PC-9 (cell line): ENCODE measurements at regions of chr11 and their contacts with region 1.

Region 1: GRCh38 chr11:73152861-73153483 is 10.9 kb upstream of the FCHSD2 start:
- DNase-seq: peak; percentile 57 to 66
- H3K4me3 ChIP-seq: no peak overlapping the region
- H3K27ac ChIP-seq: no peak overlapping the region
- H3K4me1 ChIP-seq: peaks cover 24% of the 10 kb centered on the region
- H3K27me3 ChIP-seq: no peaks in the 10 kb centered on the region
- CTCF ChIP-seq: no peak

Region 2: DNA sequence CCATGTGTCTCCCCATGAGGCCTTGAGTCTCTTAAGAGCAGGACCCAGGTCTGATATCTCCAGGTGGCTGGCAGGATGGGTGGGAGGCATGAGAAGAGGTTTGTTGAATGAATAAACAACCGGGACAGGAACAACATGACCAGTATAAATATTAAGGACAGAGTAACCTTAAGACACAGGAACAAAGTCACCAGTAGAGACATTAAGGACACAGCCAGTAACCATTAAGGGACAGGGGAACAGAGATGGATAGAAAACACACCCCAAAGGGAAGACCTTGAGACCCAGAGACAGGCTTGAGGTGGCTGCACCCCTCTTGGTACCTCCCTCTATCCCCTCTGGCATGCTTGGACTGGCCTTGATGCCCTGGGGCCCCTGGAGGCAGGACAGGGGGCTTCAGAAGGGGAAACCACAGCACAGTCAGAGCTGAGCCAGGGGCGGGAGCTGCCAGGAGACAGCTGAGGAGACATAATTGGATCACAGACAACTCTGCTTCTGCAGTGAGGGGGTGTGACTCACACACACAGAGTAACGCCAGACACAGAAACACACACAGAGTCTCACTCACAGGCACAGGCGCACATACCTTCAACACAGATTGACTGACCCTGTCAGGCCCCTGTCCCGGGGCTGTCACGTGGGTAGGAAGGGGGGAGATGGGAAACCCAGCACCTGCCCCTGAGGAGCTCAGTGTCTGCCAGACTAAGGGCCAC is 379.8 kb before region 1 on chr11:
- CTCF ChIA-PET with region 1: no interaction called
- POLR2A ChIA-PET with region 1: interaction called, 12 read pairs
- intact Hi-C with region 1: no loop called
- DNase-seq: no peak
- H3K4me3 ChIP-seq: no peak overlapping the region
- H3K27ac ChIP-seq: no peak overlapping the region
- H3K4me1 ChIP-seq: peaks cover 18% of the 10 kb centered on the region
- H3K27me3 ChIP-seq: no peaks in the 10 kb centered on the region
- CTCF ChIP-seq: no peak

Region 3: GRCh38 chr11:72885749-72886609 is 267.0 kb before region 1 on chr11:
- CTCF ChIA-PET with region 1: interaction called, 10 read pairs
- POLR2A ChIA-PET with region 1: no interaction called
- intact Hi-C with region 1: no loop called
- DNase-seq: no peak
- H3K4me3 ChIP-seq: no peak overlapping the region
- H3K27ac ChIP-seq: no peak overlapping the region
- H3K4me1 ChIP-seq: no peaks in the 10 kb centered on the region
- H3K27me3 ChIP-seq: no peaks in the 10 kb centered on the region
- CTCF ChIP-seq: no peak

Region 4: GRCh38 chr11:73198677-73199076 is 45.7 kb after region 1 on chr11:
- CTCF ChIA-PET with region 1: no interaction called
- POLR2A ChIA-PET with region 1: no interaction called
- intact Hi-C with region 1: no loop called
- DNase-seq: peak in 1 of 2 experiments; percentile 96
- H3K4me3 ChIP-seq: no peak overlapping the region
- H3K27ac ChIP-seq: peak overlapping the region; percentile 99
- H3K4me1 ChIP-seq: peaks cover 98% of the 10 kb centered on the region
- H3K27me3 ChIP-seq: no peaks in the 10 kb centered on the region
- CTCF ChIP-seq: no peak

Region 5: GRCh38 chr11:73242251-73243079 is 89.5 kb after region 1 on chr11:
- CTCF ChIA-PET with region 1: no interaction called
- POLR2A ChIA-PET with region 1: no interaction called
- intact Hi-C with region 1: no loop called
- DNase-seq: peak in 1 of 2 experiments; percentile 79
- H3K4me3 ChIP-seq: no peak overlapping the region
- H3K27ac ChIP-seq: no peak overlapping the region
- H3K4me1 ChIP-seq: peaks cover 44% of the 10 kb centered on the region
- H3K27me3 ChIP-seq: no peaks in the 10 kb centered on the region
- CTCF ChIP-seq: peak; percentile 94

Region 6: GRCh38 chr11:73271936-73272719 is 119.2 kb after region 1 on chr11 and contains the start of gene P2RY6:
- CTCF ChIA-PET with region 1: no interaction called
- POLR2A ChIA-PET with region 1: interaction called, 12 read pairs
- intact Hi-C with region 1: no loop called
- DNase-seq: peak; percentile 84 to 99
- H3K4me3 ChIP-seq: peak within 1 kb of the TSS; percentile 80
- H3K27ac ChIP-seq: peak within 1 kb of the TSS; percentile 85
- H3K4me1 ChIP-seq: peaks cover 74% of the 10 kb centered on the region
- H3K27me3 ChIP-seq: no peaks in the 10 kb centered on the region
- CTCF ChIP-seq: no peak
- total RNA-seq, gene P2RY6: 29.7 and 34.7 TPM in 2 replicates

Region 7: DNA sequence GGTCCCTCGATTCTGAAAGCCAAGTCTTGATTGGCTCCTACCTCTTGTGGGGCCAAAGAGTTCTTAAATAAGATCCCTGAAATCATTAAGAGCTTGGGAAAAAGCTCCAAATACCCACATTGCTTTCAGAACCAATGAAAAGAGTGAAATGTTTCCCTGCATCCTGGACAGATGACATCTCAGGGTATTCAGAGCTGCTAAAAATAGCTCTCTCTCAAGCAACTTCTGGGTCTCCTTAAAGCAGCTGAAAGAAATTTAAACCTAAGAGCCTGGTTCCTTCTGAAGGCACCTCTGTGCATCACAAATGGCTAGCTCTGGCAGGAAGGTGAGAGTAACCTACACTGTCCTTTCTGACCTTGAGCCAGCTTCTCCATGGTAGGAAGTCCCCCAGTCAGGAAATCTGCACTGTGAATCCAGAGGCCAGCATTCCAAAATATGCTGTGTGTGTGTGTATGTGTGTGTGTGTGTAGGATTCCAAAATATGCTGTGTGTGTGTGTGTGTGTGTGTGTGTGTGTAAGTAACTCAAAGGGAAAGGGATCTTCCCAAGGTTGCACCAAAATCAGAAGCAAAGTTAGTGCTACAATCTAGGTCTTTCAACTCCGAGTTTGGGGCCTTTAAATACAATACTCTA is 273.4 kb after region 1 on chr11:
- CTCF ChIA-PET with region 1: no interaction called
- POLR2A ChIA-PET with region 1: no interaction called
- intact Hi-C with region 1: no loop called
- DNase-seq: no peak
- H3K4me3 ChIP-seq: no peak overlapping the region
- H3K27ac ChIP-seq: no peak overlapping the region
- H3K4me1 ChIP-seq: no peaks in the 10 kb centered on the region
- H3K27me3 ChIP-seq: no peaks in the 10 kb centered on the region
- CTCF ChIP-seq: no peak